ENCODE measurements at regions of chrX and their contacts with region 1.

Region 1: GRCh38 chrX:102950908-102951866 is 14.1 kb downstream of the RAB40AL start:
- DNase-seq: peak; percentile 59
- ATAC-seq: peak; percentile 49
- H3K4me3 Mint-ChIP-seq: no peak overlapping the region
- H3K27ac Mint-ChIP-seq: no peak overlapping the region
- H3K4me1 Mint-ChIP-seq: peaks cover 4% of the 10 kb centered on the region
- H3K27me3 Mint-ChIP-seq: no peaks in the 10 kb centered on the region

Region 2: GRCh38 chrX:102934624-102935023 is 16.6 kb before region 1 on chrX:
- CTCF ChIA-PET with region 1: interaction called, 20 read pairs
- POLR2A ChIA-PET with region 1: no interaction called
- DNase-seq: peak; percentile 36
- ATAC-seq: no peak
- H3K4me3 Mint-ChIP-seq: no peak overlapping the region
- H3K27ac Mint-ChIP-seq: no peak overlapping the region
- H3K4me1 Mint-ChIP-seq: no peaks in the 10 kb centered on the region
- H3K27me3 Mint-ChIP-seq: no peaks in the 10 kb centered on the region

Region 3: GRCh38 chrX:103175944-103176753 is 225.0 kb after region 1 on chrX:
- CTCF ChIA-PET with region 1: interaction called, 10 read pairs
- POLR2A ChIA-PET with region 1: no interaction called
- DNase-seq: peak; percentile 66
- ATAC-seq: no peak
- H3K4me3 Mint-ChIP-seq: no peak overlapping the region
- H3K27ac Mint-ChIP-seq: no peak overlapping the region
- H3K4me1 Mint-ChIP-seq: peaks cover 3% of the 10 kb centered on the region
- H3K27me3 Mint-ChIP-seq: peaks cover 4% of the 10 kb centered on the region